Prostate gland (tissue), 2 donors: ENCODE measurements at regions of chr5 and their contacts with region 1.

Region 1: GRCh38 chr5:109688971-109689739 is 572 bp upstream of the MAN2A1 start:
- DNase-seq: peak; percentile 82
- H3K4me3 ChIP-seq: peak overlapping the region; percentile 79 to 91
- H3K27ac ChIP-seq: peak overlapping the region; percentile 97 to 98
- H3K4me1 ChIP-seq: no peaks in the 10 kb centered on the region
- H3K27me3 ChIP-seq: no peaks in the 10 kb centered on the region
- CTCF ChIP-seq: peak in 3 of 4 experiments; percentile 10 to 24 (median 17)
- POLR2A ChIP-seq: peak; percentile 95

Region 2: DNA sequence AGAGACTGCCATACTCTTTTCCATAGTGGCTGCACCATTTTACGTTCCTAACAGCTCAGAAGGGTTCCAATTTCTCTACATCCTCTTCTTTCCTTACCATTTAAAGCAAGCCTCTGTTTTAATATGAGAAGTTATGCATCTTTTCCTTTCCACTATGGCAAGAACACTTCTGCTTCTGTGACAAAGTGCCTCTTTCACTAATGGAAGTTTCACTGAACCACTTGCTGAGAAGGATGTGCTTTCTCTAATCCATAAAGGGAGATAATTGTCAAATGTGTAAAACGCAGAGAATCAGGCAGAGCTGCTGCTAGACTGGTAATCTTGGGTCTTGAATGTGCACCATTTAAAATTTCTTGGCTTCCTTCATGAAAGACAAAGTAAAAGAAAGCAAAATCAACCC is 411.0 kb before region 1 on chr5:
- intact Hi-C with region 1: no loop called
- DNase-seq: no peak
- H3K4me3 ChIP-seq: no peak overlapping the region
- H3K27ac ChIP-seq: no peak overlapping the region
- H3K4me1 ChIP-seq: no peaks in the 10 kb centered on the region
- H3K27me3 ChIP-seq: no peaks in the 10 kb centered on the region
- CTCF ChIP-seq: no peak
- POLR2A ChIP-seq: no peak

Region 3: GRCh38 chr5:109852371-109853155 is 163.4 kb after region 1 on chr5:
- intact Hi-C with region 1: loop called (anchors 10 kb)
- DNase-seq: no peak
- H3K4me3 ChIP-seq: no peak overlapping the region
- H3K27ac ChIP-seq: no peak overlapping the region
- H3K4me1 ChIP-seq: no peaks in the 10 kb centered on the region
- H3K27me3 ChIP-seq: no peaks in the 10 kb centered on the region
- CTCF ChIP-seq: no peak
- POLR2A ChIP-seq: no peak

Region 4: DNA sequence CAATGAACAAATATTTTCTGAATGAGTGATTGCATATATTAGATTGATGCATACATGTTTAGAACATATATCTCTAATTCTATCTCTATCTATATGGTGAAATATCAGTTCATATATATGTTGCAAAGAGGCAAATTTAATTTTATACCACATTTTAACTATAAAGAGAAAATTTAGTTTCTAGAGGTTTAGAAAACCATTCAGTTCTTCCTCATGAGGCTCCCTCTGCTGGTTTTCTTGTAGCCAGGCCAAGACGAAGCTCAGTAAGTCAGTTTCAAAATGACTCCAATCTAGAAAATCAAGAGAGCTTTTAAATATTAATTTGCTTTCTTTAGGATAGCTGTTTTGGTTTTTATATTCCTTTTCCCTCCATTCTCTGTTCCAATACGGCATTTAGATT is 725.2 kb after region 1 on chr5:
- intact Hi-C with region 1: loop called (anchors 5 kb)
- DNase-seq: no peak
- H3K4me3 ChIP-seq: no peak overlapping the region
- H3K27ac ChIP-seq: no peak overlapping the region
- H3K4me1 ChIP-seq: no peaks in the 10 kb centered on the region
- H3K27me3 ChIP-seq: no peaks in the 10 kb centered on the region
- CTCF ChIP-seq: no peak
- POLR2A ChIP-seq: no peak

Region 5: GRCh38 chr5:110625376-110625999 is 936.3 kb after region 1 on chr5:
- intact Hi-C with region 1: loop called (anchors 10 kb)
- DNase-seq: no peak
- H3K4me3 ChIP-seq: no peak overlapping the region
- H3K27ac ChIP-seq: no peak overlapping the region
- H3K4me1 ChIP-seq: no peaks in the 10 kb centered on the region
- H3K27me3 ChIP-seq: no peaks in the 10 kb centered on the region
- CTCF ChIP-seq: peak; percentile 20 to 61 (median 46)
- POLR2A ChIP-seq: no peak